HEK293T (cell line): ENCODE measurements at regions of chr5 and their contacts with region 1.

Region 1: GRCh38 chr5:150469718-150470469 is 20.4 kb upstream of the RPS14 start:
- DNase-seq: no peak

Region 2: DNA sequence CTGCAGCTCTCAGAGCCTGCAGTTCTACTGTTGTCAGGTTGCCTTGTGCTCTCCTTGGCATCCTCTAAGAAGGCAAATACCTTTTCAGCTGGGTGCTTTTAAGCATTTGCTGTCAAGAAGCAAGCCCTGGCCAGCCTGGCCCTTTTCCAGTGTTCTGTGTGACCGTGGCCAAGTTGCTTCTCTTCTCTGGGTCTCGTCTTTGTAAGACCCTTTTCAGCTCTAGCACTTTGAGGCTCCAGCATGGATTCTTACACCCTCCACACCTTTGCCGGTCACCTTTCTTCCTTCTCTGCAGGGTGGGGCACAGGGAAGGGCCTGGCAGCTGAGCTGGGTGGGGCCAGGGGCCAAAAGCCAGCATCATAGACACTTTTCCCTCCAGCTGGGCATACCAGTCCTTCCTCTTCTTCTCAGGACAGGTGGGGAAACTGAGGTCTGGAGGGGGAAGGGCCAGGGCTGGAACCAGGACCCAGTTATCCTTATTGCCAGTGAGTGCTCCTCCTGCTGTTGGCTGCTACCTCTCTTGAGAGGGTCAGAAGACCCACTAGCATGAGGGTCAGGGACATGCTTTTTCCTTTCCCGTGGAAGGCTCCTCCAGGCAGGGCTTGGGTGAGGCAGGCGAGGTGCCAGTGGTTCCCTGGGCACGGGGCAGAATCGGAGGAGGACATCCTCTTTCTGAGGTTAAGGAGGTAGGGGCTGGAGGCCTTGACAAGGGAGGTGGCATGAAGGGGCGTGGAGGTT is 37.6 kb after region 1 on chr5:
- CTCF ChIA-PET with region 1: no interaction called
- POLR2A ChIA-PET with region 1: no interaction called
- DNase-seq: no peak

Region 3: DNA sequence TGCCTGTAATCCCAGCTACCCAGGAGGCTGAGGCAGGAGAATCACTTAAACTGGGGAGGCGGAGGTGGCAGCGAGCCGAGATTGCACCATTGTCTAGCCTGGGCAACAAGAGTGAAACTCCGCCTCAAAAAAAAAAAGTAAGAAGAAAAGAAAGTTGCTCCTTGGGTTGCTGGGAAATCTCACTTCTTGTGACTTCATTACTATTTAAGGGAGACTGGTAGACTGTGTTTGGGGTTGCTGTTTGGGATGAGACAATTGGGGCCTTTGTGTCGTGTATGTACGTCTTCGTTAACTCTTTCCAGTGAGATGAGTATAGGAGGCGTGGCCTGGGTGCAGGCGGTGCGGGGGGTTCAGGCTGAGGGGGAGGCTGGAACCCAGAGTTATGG is 49.7 kb after region 1 on chr5:
- CTCF ChIA-PET with region 1: interaction called, 10 read pairs
- POLR2A ChIA-PET with region 1: no interaction called
- DNase-seq: no peak